ENCODE measurements at regions of chr1 and their contacts with region 1.

Region 1: GRCh38 chr1:78617615-78618026 is 2.6 kb upstream of the IFI44L start:
- DNase-seq: peak in 9 of 10 donors; percentile 30 to 91 (median 53)

Region 2: DNA sequence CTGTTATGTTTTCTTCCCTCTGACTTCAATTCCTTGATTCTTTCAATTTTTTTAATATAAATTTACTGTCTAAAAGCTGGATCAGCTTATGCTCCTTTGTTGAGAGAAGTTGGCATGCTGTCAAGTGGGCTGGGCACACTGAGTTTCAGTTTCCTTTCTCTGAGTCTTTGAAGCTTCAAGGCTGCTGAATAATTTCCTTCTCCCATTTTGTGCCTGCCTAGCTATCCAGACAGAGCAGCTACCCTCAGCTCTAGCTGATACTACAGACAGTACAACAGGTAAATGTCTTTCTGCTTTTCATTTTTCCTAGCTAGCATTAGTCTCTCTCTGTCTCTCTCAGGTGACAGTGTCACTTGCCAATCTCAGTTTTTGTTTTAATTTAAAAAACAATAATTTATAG is 32.0 kb after region 1 on chr1 and contains the start of gene IFI44:
- intact Hi-C with region 1: loop called (anchors 5 kb)
- DNase-seq: peak in 7 of 10 donors; percentile 27 to 83 (median 40)